ENCODE measurements at regions of chr1 and their contacts with region 1.

Region 1: DNA sequence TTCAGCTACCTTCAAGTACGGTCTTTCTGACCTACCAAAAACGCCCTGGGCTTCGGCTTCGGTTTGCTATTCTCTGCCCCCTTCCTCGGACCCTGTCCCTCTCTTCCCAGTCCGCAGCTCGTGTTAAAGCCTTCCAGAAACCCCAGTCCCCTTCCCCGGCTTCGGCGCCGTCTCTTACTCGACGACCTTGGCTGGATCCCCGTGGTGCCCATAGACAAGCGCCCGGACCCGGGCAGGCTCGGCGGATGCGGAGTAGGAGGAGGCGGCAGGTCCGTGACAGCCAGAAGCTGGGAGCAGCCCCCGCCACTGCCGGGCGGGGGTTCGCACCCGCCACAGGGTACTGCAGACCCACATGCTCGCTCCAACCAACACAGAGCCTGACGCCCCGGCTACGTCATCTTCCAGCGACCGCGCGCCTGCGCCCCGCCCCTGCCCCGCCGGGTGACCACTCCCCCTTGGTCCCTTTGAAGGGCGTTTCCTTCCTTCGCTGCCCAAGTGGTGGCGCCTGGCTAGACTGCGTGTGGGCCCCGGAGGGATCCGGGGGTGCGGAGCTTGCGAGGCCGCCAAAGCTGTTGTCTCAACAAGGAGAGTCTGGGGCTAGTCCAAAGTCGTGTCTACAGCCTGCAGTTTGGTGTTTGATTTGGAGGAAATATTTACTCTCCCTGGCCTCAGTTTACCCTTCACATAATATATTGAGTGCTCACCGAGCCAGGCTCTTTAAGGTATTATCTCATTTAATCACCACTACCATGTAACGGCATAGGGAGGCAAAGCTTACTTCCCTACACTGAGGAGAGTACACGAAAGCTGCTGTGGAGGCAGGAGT is at the start of gene MECR:
- DNase-seq: peak; percentile 92 to 97 (median 95)
- ATAC-seq: peak; percentile 93 to 99 (median 98)
- H3K4me3 ChIP-seq: peak within 1 kb of the TSS; percentile 44 to 93 (median 73)
- H3K27ac ChIP-seq: peak within 1 kb of the TSS in 11 of 12 donors; percentile 35 to 74 (median 66)
- H3K4me1 ChIP-seq: peaks cover 0 to 20% (median 13%) of the 10 kb centered on the region in 12 donors
- H3K27me3 ChIP-seq: peaks cover 0 to 3% (median 0%) of the 10 kb centered on the region in 9 donors
- CTCF ChIP-seq: peak in 6 of 12 donors; percentile 11 to 39 (median 26)
- POLR2A ChIP-seq: peak in 1 of 2 donors; percentile 55
- total RNA-seq, gene MECR: 19.6 to 37.4 (median 33.1) TPM

Region 2: GRCh38 chr1:29383746-29384371 is 153.1 kb after region 1 on chr1:
- intact Hi-C with region 1: no loop called
- DNase-seq: no peak
- ATAC-seq: no peak
- H3K4me3 ChIP-seq: no peak overlapping the region
- H3K27ac ChIP-seq: no peak overlapping the region
- H3K4me1 ChIP-seq: no peaks in the 10 kb centered on the region
- H3K27me3 ChIP-seq: peaks cover 0 to 54% (median 14%) of the 10 kb centered on the region in 9 donors
- CTCF ChIP-seq: no peak
- POLR2A ChIP-seq: no peak

Region 3: GRCh38 chr1:29426810-29427209 is 196.0 kb after region 1 on chr1:
- intact Hi-C with region 1: loop called in 1 of 10 experiments (anchors 10 kb)
- DNase-seq: peak in 2 of 5 donors; percentile 54 to 72
- ATAC-seq: peak; percentile 32 to 91 (median 63)
- H3K4me3 ChIP-seq: no peak overlapping the region
- H3K27ac ChIP-seq: no peak overlapping the region
- H3K4me1 ChIP-seq: peaks cover 0 to 9% (median 0%) of the 10 kb centered on the region in 12 donors
- H3K27me3 ChIP-seq: peaks cover 0 to 11% (median 0%) of the 10 kb centered on the region in 9 donors
- CTCF ChIP-seq: no peak
- POLR2A ChIP-seq: no peak

Region 4: GRCh38 chr1:29849038-29849750 is 618.4 kb after region 1 on chr1:
- intact Hi-C with region 1: loop called in 2 of 10 experiments (anchors 5 to 10 kb)
- DNase-seq: no peak
- ATAC-seq: no peak
- H3K4me3 ChIP-seq: no peak overlapping the region
- H3K27ac ChIP-seq: no peak overlapping the region
- H3K4me1 ChIP-seq: peaks cover 0 to 7% (median 0%) of the 10 kb centered on the region in 12 donors
- H3K27me3 ChIP-seq: peaks cover 0 to 52% (median 8%) of the 10 kb centered on the region in 9 donors
- CTCF ChIP-seq: peak; percentile 13 to 52 (median 37)
- POLR2A ChIP-seq: no peak

Region 5: GRCh38 chr1:30111431-30111830 is 880.7 kb after region 1 on chr1:
- intact Hi-C with region 1: loop called in 4 of 10 experiments (anchors 5 to 10 kb)
- DNase-seq: peak in 3 of 5 donors; percentile 35 to 43 (median 39)
- ATAC-seq: peak in 3 of 4 donors; percentile 75 to 78 (median 76)
- H3K4me3 ChIP-seq: no peak overlapping the region
- H3K27ac ChIP-seq: no peak overlapping the region
- H3K4me1 ChIP-seq: no peaks in the 10 kb centered on the region
- H3K27me3 ChIP-seq: peaks cover 0 to 67% (median 16%) of the 10 kb centered on the region in 9 donors
- CTCF ChIP-seq: peak; percentile 39 to 70 (median 58)
- POLR2A ChIP-seq: no peak

Region 6: DNA sequence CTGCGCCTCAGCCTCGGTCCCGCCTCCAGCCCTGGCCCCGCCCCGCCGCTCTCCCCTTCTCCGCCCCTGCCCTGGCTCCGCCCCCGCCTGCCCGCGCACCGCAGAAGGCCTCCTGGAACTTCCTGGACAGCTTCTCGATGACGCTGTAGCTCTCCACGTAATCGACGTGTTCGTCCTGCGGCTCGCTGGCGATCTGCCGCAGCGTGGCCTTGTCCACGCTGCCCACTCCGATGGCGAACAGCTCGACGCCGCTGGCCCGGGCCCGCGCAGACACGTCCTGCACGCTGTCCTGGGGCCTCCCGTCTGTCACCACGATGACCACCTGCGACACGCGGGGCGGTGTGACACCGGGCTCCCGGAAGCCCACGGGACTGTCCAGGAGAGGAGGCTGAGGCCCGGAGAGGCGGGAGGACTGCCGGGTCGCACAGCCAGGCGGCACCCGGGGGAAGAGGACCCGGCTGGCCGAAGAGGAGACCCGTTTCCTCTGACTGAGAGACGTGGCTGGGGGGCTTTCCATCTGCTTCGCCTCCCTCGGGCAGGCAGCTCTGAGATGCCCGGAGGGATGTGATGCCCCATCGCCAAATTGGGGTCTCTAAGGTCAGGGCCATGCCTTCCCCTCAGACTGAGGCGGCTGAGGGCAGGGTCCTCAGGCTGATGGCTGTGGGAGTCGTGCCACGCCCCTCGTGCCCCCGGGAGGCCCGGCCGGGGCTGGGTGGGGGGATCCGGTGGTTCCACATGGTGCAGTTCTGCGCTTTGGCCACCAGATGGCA is 1488.1 kb after region 1 on chr1:
- intact Hi-C with region 1: loop called in 2 of 10 experiments (anchors 5 kb)
- DNase-seq: peak in 4 of 5 donors; percentile 80 to 98 (median 86)
- ATAC-seq: peak; percentile 73 to 88 (median 86)
- H3K4me3 ChIP-seq: peak overlapping the region; percentile 24 to 71 (median 56)
- H3K27ac ChIP-seq: peak overlapping the region; percentile 80 to 100 (median 95)
- H3K4me1 ChIP-seq: peaks cover 0 to 15% (median 8%) of the 10 kb centered on the region in 12 donors
- H3K27me3 ChIP-seq: no peaks in the 10 kb centered on the region
- CTCF ChIP-seq: peak; percentile 95 to 99 (median 98)
- POLR2A ChIP-seq: peak in 1 of 2 donors; percentile 73

Measured in heart left ventricle (tissue), 16 donors.